Activated naive CD4-positive, alpha-beta T cell treated with anti-CD3 and anti-CD28 coated beads for 36 hours (primary cell): ENCODE measurements at regions of chr9 and their contacts with region 1.

Region 1: DNA sequence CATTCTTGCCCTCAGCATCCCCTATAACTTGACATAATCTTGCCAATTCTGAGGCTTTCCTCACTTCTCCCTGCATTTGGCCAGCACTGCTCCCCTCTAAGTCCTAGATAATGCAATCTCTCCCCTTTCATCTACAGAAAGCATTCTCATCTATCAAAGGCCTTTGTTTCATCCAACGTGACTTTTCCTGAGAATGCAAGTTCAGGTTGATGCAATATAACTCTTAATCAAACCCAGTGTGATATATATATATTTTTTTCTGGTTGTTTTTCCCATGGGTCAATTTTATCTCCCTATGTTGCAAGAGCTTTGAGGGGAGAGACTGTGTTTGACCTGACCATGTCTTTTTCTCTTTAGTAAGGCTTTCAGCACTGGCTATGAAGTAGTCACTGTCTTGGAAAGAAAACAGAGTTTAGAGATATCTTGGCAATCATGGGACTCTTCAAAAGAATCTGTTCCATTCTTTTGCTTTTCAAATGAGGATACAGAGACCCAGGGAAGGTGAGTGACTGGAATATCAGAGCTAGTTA is 268.6 kb downstream of the TRPM3 start:
- DNase-seq: no peak
- H3K4me3 Mint-ChIP-seq: no peak overlapping the region
- H3K27ac Mint-ChIP-seq: no peak overlapping the region
- H3K4me1 Mint-ChIP-seq: no peaks in the 10 kb centered on the region
- H3K27me3 Mint-ChIP-seq: peaks cover under 1% of the 10 kb centered on the region

Region 2: DNA sequence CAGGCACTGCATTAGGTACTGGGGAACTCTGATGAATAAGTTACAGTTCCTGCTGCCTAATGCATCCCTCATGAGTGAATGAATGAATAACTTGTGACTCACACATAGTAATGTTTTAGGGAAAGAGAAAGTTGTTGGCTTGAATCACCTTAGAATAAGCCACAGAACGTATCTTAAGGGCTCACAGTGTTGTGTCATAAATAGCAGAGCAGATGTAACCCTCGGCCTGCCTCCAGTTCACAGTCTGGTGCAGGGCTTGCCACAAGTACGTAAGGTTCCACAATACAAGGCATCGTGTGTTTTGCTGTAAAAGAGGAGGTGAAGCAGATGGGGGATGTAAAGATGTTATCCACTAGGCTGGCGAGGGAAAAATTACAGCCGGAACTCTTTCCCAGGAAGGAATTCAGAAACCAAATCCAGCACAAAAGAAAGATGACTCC is 49.9 kb after region 1 on chr9:
- CTCF ChIA-PET with region 1: no interaction called
- intact Hi-C with region 1: loop called (anchors 5 kb)
- DNase-seq: no peak
- H3K4me3 Mint-ChIP-seq: no peak overlapping the region
- H3K27ac Mint-ChIP-seq: no peak overlapping the region
- H3K4me1 Mint-ChIP-seq: no peaks in the 10 kb centered on the region
- H3K27me3 Mint-ChIP-seq: peaks cover 1% of the 10 kb centered on the region

Region 3: GRCh38 chr9:70954126-70954525 is 101.3 kb after region 1 on chr9:
- CTCF ChIA-PET with region 1: no interaction called
- intact Hi-C with region 1: no loop called
- DNase-seq: no peak
- H3K4me3 Mint-ChIP-seq: no peak overlapping the region
- H3K27ac Mint-ChIP-seq: no peak overlapping the region
- H3K4me1 Mint-ChIP-seq: no peaks in the 10 kb centered on the region
- H3K27me3 Mint-ChIP-seq: peaks cover 4% of the 10 kb centered on the region